PC-3 (cell line): ENCODE measurements at regions of chr10 and their contacts with region 1.

Region 1: DNA sequence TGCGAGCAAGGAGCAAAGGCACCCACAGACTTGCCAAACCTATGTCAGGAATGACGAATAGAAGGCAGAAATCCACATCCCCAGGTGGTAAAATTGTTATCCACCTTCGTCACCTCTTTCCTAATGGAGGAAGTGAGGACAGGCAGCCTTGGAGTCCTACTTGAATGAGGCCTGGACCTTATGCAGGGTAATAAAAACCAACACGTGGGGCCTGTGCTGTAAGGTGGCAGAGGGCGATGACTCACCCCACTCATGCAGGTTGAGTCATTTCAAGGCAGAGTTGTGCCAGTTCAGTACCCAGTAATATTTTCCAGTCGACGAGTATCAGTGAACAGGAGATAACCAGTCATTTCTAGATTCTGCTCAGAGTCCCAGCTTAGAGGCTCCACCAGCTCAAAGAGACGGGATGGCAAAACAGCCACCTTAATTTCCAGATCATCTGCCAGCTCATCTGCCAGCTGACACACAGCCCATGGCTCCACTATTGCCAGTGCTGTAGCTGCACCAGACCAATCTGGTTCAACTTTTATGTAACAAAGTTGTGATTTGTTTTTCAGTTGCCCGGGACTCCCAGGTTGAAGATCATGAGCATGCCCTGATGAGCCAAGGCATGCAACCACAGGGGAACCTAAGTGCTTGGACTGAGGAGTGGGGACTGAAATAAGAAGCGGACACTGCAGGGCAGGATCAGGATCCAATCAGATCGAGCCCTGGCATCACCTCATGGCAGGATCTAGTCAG is 176.2 kb upstream of the ITGB1 start:
- DNase-seq: peak; percentile 100
- ATAC-seq: peak; percentile 95
- H3K4me3 ChIP-seq: no peak overlapping the region; the same call in 1 of the 2 replicates
- H3K27ac ChIP-seq: peak overlapping the region; percentile 65
- H3K4me1 ChIP-seq: peaks cover 41% of the 10 kb centered on the region
- H3K27me3 ChIP-seq: no peaks in the 10 kb centered on the region
- CTCF ChIP-seq: no peak

Region 2: DNA sequence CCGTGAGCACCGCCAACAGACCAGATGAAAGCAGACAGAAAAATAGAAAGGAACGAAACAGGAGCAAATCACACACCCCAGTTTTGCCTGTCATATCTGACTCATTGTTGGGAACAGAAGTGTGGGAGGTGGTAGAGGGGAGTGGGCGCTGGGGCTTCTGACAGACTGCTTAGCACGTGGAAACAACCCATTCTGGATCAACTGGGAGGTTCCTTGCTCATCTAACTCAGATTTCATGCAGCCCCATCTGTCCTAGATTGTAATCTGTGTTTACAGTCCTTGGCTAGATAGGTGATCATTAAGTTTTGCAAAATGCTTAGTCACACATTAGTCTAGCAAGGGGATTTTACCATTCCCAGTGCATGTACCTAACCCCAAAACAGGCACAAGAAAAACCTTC is 46.2 kb after region 1 on chr10:
- CTCF ChIA-PET with region 1: no interaction called
- POLR2A ChIA-PET with region 1: interaction called, 12 read pairs
- intact Hi-C with region 1: loop called (anchors 2 kb)
- DNase-seq: peak; percentile 82
- ATAC-seq: peak; percentile 8
- H3K4me3 ChIP-seq: no peak overlapping the region
- H3K27ac ChIP-seq: peak overlapping the region; percentile 9
- H3K4me1 ChIP-seq: peaks cover 36% of the 10 kb centered on the region
- H3K27me3 ChIP-seq: no peaks in the 10 kb centered on the region
- CTCF ChIP-seq: no peak

Region 3: GRCh38 chr10:33216661-33217427 is 82.7 kb after region 1 on chr10:
- CTCF ChIA-PET with region 1: no interaction called
- POLR2A ChIA-PET with region 1: interaction called, 5 read pairs
- intact Hi-C with region 1: loop called (anchors 1 kb)
- DNase-seq: peak; percentile 100
- ATAC-seq: peak; percentile 91
- H3K4me3 ChIP-seq: peak overlapping the region; percentile 6; the same call in 1 of the 2 replicates
- H3K27ac ChIP-seq: peak overlapping the region; percentile 65
- H3K4me1 ChIP-seq: peaks cover 46% of the 10 kb centered on the region
- H3K27me3 ChIP-seq: no peaks in the 10 kb centered on the region
- CTCF ChIP-seq: no peak

Region 4: GRCh38 chr10:33248638-33249037 is 114.5 kb after region 1 on chr10:
- CTCF ChIA-PET with region 1: no interaction called
- POLR2A ChIA-PET with region 1: no interaction called
- intact Hi-C with region 1: loop called (anchors 1 kb)
- DNase-seq: peak; percentile 100
- ATAC-seq: peak; percentile 43
- H3K4me3 ChIP-seq: no peak overlapping the region
- H3K27ac ChIP-seq: peak overlapping the region; percentile 65
- H3K4me1 ChIP-seq: peaks cover 52% of the 10 kb centered on the region
- H3K27me3 ChIP-seq: no peaks in the 10 kb centered on the region
- CTCF ChIP-seq: no peak